RWPE1 (cell line): ENCODE measurements at regions of chr4 and their contacts with region 1.

Region 1: GRCh38 chr4:118367361-118367760 is 14.6 kb upstream of the PRSS12 start:
- DNase-seq: no peak
- H3K27ac ChIP-seq: no peak overlapping the region
- CTCF ChIP-seq: no peak

Region 2: DNA sequence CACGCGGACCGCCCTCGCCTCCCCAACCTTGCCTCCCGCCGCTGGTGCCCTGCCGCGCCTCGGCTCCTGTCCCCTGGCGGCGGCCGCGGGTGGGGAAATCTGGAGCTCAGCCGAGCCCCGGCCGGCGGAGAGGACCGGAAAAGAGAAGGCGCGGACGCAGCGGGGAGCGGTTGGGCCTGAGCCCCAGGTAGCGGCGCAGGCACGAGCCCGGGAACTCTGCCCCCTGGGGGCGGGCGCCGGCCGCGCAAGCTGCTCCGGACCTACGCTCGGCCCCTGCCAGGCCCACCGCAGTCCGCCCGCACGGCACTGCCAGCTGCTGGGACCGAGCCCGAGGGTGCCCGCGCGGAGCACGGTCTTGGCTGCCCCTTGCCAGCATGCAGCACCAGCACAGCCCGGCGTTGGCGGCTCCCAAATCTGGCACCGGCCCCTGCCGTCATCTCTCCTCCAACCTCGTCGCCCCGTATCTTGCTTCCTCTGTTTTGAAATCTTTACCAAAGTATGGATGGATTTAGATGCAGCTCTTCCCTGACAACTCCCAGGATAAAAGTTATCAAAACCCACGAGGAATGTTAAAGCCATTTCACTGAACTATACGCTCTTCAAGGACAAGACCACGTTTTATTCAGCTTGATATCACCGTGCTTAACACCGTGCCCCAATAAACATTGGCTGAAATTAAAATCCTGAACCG is 14.4 kb before region 1 on chr4 and contains the start of gene PRSS12:
- CTCF ChIA-PET with region 1: interaction called, 11 read pairs
- POLR2A ChIA-PET with region 1: no interaction called
- DNase-seq: peak; percentile 69
- H3K27ac ChIP-seq: no peak within 1 kb of the TSS
- CTCF ChIP-seq: peak; percentile 77